CD8-positive, alpha-beta T cell (primary cell): ENCODE measurements at regions of chr3 and their contacts with region 1.

Region 1: GRCh38 chr3:184174646-184175492 is at the start of gene AP2M1:
- DNase-seq: peak; percentile 96 to 99 (median 97)
- ATAC-seq: peak; percentile 98
- H3K4me3 ChIP-seq: peak within 1 kb of the TSS; percentile 83 to 93
- H3K4me3 Mint-ChIP-seq: peak within 1 kb of the TSS; percentile 96
- H3K27ac ChIP-seq: peak within 1 kb of the TSS; percentile 71 to 73
- H3K27ac Mint-ChIP-seq: peak within 1 kb of the TSS; percentile 90
- H3K4me1 ChIP-seq: peaks cover 26% of the 10 kb centered on the region
- H3K4me1 Mint-ChIP-seq: peaks cover 32% of the 10 kb centered on the region
- H3K27me3 ChIP-seq: no peaks in the 10 kb centered on the region
- H3K27me3 Mint-ChIP-seq: no peaks in the 10 kb centered on the region
- CTCF ChIP-seq: no peak
- total RNA-seq, gene AP2M1: 121 to 123 TPM

Region 2: GRCh38 chr3:183629546-183630301 is 545.1 kb before region 1 on chr3:
- CTCF ChIA-PET with region 1: no interaction called
- POLR2A ChIA-PET with region 1: no interaction called
- intact Hi-C with region 1: loop called in 1 of 2 experiments (anchors 5 kb)
- DNase-seq: no peak
- ATAC-seq: no peak
- H3K4me3 ChIP-seq: no peak overlapping the region
- H3K4me3 Mint-ChIP-seq: no peak overlapping the region
- H3K27ac ChIP-seq: no peak overlapping the region
- H3K27ac Mint-ChIP-seq: no peak overlapping the region
- H3K4me1 ChIP-seq: no peaks in the 10 kb centered on the region
- H3K4me1 Mint-ChIP-seq: peaks cover 3% of the 10 kb centered on the region
- H3K27me3 ChIP-seq: no peaks in the 10 kb centered on the region
- H3K27me3 Mint-ChIP-seq: peaks cover 2% of the 10 kb centered on the region
- CTCF ChIP-seq: no peak

Region 3: GRCh38 chr3:184135149-184135910 is 39.5 kb before region 1 on chr3 and contains the start of gene EIF2B5:
- CTCF ChIA-PET with region 1: interaction called, 4 read pairs
- POLR2A ChIA-PET with region 1: interaction called, 4 read pairs
- intact Hi-C with region 1: loop called (anchors 1 kb)
- DNase-seq: peak; percentile 67 to 95 (median 87)
- ATAC-seq: peak; percentile 89
- H3K4me3 ChIP-seq: peak within 1 kb of the TSS; percentile 79 to 91
- H3K4me3 Mint-ChIP-seq: peak within 1 kb of the TSS; percentile 100
- H3K27ac ChIP-seq: peak within 1 kb of the TSS; percentile 76 to 83
- H3K27ac Mint-ChIP-seq: peak within 1 kb of the TSS; percentile 98
- H3K4me1 ChIP-seq: peaks cover 25% of the 10 kb centered on the region
- H3K4me1 Mint-ChIP-seq: peaks cover 41% of the 10 kb centered on the region
- H3K27me3 ChIP-seq: no peaks in the 10 kb centered on the region
- H3K27me3 Mint-ChIP-seq: no peaks in the 10 kb centered on the region
- CTCF ChIP-seq: no peak
- total RNA-seq, gene EIF2B5: 52.6 to 61.9 TPM

Region 4: DNA sequence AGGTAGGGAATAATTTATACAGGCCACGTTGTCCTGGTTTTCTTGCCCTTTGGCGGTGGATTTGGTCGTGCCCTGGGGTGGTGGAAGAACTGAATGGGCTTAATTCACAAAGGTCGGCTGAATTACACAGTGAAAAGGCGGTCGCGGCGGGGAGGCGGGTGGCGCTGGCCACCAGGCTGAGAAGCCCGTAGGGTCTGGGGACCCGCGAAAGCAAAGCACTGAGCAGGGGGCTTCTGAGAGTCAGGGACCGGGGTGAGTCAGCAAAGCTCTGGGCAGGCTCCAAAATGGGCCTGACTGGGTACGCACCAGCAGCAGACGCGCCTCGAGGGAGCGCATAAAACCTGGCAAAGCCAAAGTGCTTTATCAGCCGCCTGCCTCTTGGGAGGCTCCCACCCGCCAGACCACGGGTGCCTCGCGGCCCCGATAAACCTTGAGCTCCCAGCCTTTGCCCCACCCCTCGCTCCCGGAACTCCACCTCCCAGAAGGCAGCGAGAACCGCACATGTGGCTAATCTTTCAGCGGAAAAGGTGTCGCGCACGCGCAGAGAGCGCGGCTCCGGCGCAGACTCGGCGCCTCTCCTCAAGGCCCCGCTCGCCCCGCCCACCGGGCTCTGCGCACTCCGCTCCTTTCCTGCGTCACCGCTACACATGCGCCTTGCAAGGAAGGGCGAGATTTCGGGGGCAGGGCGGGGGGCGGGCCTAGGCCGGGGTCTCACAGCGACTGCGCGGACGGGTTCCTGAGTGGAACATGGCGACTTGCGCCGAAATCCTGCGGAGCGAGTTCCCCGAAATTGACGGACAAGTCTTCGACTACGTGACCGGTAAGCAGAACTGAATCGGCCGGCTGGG is 10.8 kb after region 1 on chr3 and contains the start of gene ABCF3:
- CTCF ChIA-PET with region 1: interaction called, 5 read pairs
- POLR2A ChIA-PET with region 1: interaction called, 16 read pairs
- intact Hi-C with region 1: loop called (anchors 1 kb)
- DNase-seq: peak; percentile 98 to 100 (median 99)
- ATAC-seq: peak; percentile 97
- H3K4me3 ChIP-seq: peak within 1 kb of the TSS; percentile 95 to 98
- H3K4me3 Mint-ChIP-seq: peak within 1 kb of the TSS; percentile 98
- H3K27ac ChIP-seq: peak within 1 kb of the TSS; percentile 82 to 83
- H3K27ac Mint-ChIP-seq: peak within 1 kb of the TSS; percentile 96
- H3K4me1 ChIP-seq: peaks cover 26% of the 10 kb centered on the region
- H3K4me1 Mint-ChIP-seq: peaks cover 42% of the 10 kb centered on the region
- H3K27me3 ChIP-seq: no peaks in the 10 kb centered on the region
- H3K27me3 Mint-ChIP-seq: no peaks in the 10 kb centered on the region
- CTCF ChIP-seq: no peak
- total RNA-seq, gene ABCF3: 192 to 193 TPM

Region 5: GRCh38 chr3:184298759-184299496 is 124.1 kb after region 1 on chr3 and contains the start of gene PSMD2:
- CTCF ChIA-PET with region 1: no interaction called
- POLR2A ChIA-PET with region 1: no interaction called
- intact Hi-C with region 1: loop called (anchors 1 kb)
- DNase-seq: peak; percentile 96 to 99 (median 98)
- ATAC-seq: peak; percentile 93
- H3K4me3 ChIP-seq: peak within 1 kb of the TSS; percentile 74 to 89
- H3K4me3 Mint-ChIP-seq: peak within 1 kb of the TSS; percentile 93
- H3K27ac ChIP-seq: peak within 1 kb of the TSS; percentile 64 to 70
- H3K27ac Mint-ChIP-seq: peak within 1 kb of the TSS; percentile 91
- H3K4me1 ChIP-seq: peaks cover 10% of the 10 kb centered on the region
- H3K4me1 Mint-ChIP-seq: peaks cover 32% of the 10 kb centered on the region
- H3K27me3 ChIP-seq: no peaks in the 10 kb centered on the region
- H3K27me3 Mint-ChIP-seq: no peaks in the 10 kb centered on the region
- CTCF ChIP-seq: no peak
- total RNA-seq, gene PSMD2: 168 to 174 TPM

Region 6: GRCh38 chr3:184335661-184336546 is 161.0 kb after region 1 on chr3:
- CTCF ChIA-PET with region 1: no interaction called
- POLR2A ChIA-PET with region 1: no interaction called
- intact Hi-C with region 1: loop called in 1 of 2 experiments (anchors 1 kb)
- DNase-seq: peak; percentile 78 to 94 (median 86)
- ATAC-seq: peak; percentile 72
- H3K4me3 ChIP-seq: peak overlapping the region; percentile 50 to 63
- H3K4me3 Mint-ChIP-seq: peak overlapping the region; percentile 90
- H3K27ac ChIP-seq: peak overlapping the region; percentile 81 to 97
- H3K27ac Mint-ChIP-seq: peak overlapping the region; percentile 96
- H3K4me1 ChIP-seq: peaks cover 16% of the 10 kb centered on the region
- H3K4me1 Mint-ChIP-seq: peaks cover 25% of the 10 kb centered on the region
- H3K27me3 ChIP-seq: no peaks in the 10 kb centered on the region
- H3K27me3 Mint-ChIP-seq: no peaks in the 10 kb centered on the region
- CTCF ChIP-seq: no peak